GM10248 (cell line): ENCODE measurements at regions of chr14 and their contacts with region 1.

Region 1: DNA sequence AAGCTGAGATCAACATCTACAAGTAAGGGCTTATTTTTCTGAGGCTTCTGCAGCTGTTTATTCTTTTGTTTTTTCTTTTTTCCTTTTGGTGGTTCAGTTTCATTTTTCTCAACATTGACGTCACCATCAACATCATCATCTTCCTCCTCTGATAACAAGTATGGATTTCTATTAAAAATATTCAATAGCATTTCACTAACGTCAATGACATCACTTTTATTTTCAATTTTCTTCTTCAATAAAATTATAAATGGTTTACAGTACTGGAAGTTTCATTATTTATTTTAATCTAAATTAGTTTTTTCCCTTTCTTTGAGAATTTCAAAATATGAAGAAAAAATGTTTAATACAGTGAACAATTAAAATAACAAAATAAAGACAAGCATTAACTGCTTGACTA is 23.9 kb downstream of the NEMF start:
- DNase-seq: no peak
- CTCF ChIP-seq: no peak

Region 2: GRCh38 chr14:49677643-49678042 is 151.0 kb before region 1 on chr14:
- CTCF ChIA-PET with region 1: no interaction called
- POLR2A ChIA-PET with region 1: interaction called, 11 read pairs
- DNase-seq: no peak
- CTCF ChIP-seq: no peak

Region 3: DNA sequence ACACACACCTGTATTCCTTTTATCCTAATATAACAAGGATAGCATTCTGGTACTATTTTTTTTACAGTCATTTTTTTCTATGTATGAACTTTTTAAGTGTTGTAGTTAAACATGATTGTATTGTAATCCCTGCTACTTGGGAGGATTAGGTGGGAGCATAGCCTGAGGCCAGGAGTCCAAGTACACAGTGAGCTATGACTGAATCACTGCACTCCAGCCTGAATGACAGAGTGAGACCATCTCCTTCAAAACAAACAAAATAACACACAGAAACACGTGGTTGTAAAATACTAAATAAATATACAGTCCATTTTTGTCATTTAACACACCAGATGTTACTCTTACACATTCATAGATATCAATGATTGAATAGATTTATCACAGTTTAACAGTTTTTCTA is 646.8 kb after region 1 on chr14:
- CTCF ChIA-PET with region 1: no interaction called
- POLR2A ChIA-PET with region 1: no interaction called
- DNase-seq: no peak
- CTCF ChIP-seq: no peak